Mammary epithelial cell (primary cell): ENCODE measurements at regions of chr11 and their contacts with region 1.

Region 1: GRCh38 chr11:132064987-132065620 is 694.7 kb downstream of the NTM start:
- DNase-seq: peak; percentile 98
- H3K4me3 ChIP-seq: no peak overlapping the region
- H3K27ac ChIP-seq: peak overlapping the region; percentile 95
- H3K4me1 ChIP-seq: peaks cover 69% of the 10 kb centered on the region
- H3K27me3 ChIP-seq: no peaks in the 10 kb centered on the region
- CTCF ChIP-seq: no peak

Region 2: DNA sequence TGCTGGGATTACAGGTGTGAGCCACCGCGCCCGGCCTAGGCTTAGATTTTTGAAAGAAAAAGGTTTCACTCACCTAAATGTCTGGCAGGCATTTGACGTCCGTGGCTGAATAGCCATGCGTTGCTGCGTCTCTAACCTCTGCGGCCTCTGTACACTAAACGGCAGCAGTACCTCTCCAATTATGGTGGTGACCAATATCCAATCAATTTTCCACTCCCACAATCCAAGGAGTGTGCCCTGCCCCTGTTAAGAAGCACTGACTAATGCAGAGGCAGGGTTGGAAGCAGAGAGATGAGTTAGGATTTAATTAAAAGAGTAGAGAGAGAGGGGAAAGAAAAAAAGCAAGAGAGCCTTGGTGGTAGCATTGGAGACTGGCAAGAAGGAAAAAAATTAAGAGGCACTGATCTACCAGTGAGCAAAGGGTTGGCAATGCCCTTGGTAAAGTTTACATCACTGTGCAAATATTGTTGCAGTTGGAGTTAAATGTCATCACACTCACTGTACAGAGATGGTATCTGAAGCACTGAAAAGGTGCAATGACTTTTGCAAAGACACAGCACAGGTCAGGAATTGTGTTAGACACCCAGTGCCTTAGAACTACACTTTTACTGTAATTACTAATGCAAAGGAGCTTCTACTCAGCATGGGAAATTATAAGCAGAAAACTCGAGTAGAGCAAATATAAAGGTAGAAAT is 168.0 kb before region 1 on chr11:
- CTCF ChIA-PET with region 1: interaction called, 17 read pairs
- dilution Hi-C with region 1: no loop called
- in situ Hi-C with region 1: no loop called
- intact Hi-C with region 1: no loop called
- DNase-seq: no peak
- H3K4me3 ChIP-seq: no peak overlapping the region
- H3K27ac ChIP-seq: peak overlapping the region; percentile 85
- H3K4me1 ChIP-seq: peaks cover 40% of the 10 kb centered on the region
- H3K27me3 ChIP-seq: no peaks in the 10 kb centered on the region
- CTCF ChIP-seq: no peak

Region 3: GRCh38 chr11:131964698-131965483 is 100.2 kb before region 1 on chr11:
- CTCF ChIA-PET with region 1: no interaction called
- dilution Hi-C with region 1: no loop called
- in situ Hi-C with region 1: no loop called
- intact Hi-C with region 1: no loop called
- DNase-seq: no peak
- H3K4me3 ChIP-seq: no peak overlapping the region
- H3K27ac ChIP-seq: no peak overlapping the region
- H3K4me1 ChIP-seq: no peaks in the 10 kb centered on the region
- H3K27me3 ChIP-seq: no peaks in the 10 kb centered on the region
- CTCF ChIP-seq: no peak

Region 4: GRCh38 chr11:131977231-131977630 is 87.9 kb before region 1 on chr11:
- CTCF ChIA-PET with region 1: no interaction called
- dilution Hi-C with region 1: loop called (anchors 5 kb)
- in situ Hi-C with region 1: no loop called
- intact Hi-C with region 1: loop called (anchors 2 kb)
- DNase-seq: peak; percentile 95
- H3K4me3 ChIP-seq: peak overlapping the region in 2 of 3 experiments; percentile 21 to 26
- H3K27ac ChIP-seq: peak overlapping the region; percentile 95
- H3K4me1 ChIP-seq: peaks cover 29% of the 10 kb centered on the region
- H3K27me3 ChIP-seq: no peaks in the 10 kb centered on the region
- CTCF ChIP-seq: no peak

Region 5: GRCh38 chr11:132866783-132867545 is 801.9 kb after region 1 on chr11:
- CTCF ChIA-PET with region 1: no interaction called
- dilution Hi-C with region 1: no loop called
- in situ Hi-C with region 1: no loop called
- intact Hi-C with region 1: no loop called
- DNase-seq: peak; percentile 84
- H3K4me3 ChIP-seq: no peak overlapping the region
- H3K27ac ChIP-seq: no peak overlapping the region
- H3K4me1 ChIP-seq: peaks cover 22% of the 10 kb centered on the region
- H3K27me3 ChIP-seq: no peaks in the 10 kb centered on the region
- CTCF ChIP-seq: no peak